Posterior vena cava (tissue), 2 donors: ENCODE measurements at regions of chr6 and their contacts with region 1.

Region 1: GRCh38 chr6:106626485-106626884 is 2.8 kb downstream of the RTN4IP1 start:
- DNase-seq: no peak

Region 2: DNA sequence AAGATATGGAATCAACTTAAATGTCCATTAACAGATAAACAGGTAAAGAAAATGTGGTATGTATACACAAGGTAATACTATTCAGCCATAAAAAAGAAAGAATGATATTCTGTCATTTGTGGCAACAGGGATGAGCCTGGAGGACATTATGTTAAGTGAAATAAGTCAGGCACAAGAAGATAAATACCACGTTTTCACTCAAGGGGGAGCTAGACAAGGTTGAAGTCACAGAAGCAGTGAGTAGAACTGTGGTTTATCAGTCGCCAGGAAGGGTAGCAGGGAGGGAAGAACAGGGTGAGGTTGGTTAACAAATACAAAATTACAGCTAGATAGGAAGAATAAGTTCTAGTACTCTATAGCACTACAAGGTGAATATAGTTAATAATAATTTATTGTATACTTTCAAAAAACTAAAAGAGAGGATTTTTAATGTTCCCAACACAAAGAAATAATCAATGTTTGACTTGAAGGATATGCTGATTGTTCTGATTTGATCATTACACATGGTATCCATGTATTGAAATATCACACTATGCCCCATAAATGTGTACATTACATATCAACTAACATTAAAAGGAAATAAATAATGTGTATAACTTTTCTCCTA is 18.3 kb before region 1 on chr6:
- intact Hi-C with region 1: loop called in 1 of 2 experiments (anchors 1 kb)
- DNase-seq: no peak